Lower lobe of right lung (tissue), 2 donors: ENCODE measurements at regions of chr7 and their contacts with region 1.

Region 1: DNA sequence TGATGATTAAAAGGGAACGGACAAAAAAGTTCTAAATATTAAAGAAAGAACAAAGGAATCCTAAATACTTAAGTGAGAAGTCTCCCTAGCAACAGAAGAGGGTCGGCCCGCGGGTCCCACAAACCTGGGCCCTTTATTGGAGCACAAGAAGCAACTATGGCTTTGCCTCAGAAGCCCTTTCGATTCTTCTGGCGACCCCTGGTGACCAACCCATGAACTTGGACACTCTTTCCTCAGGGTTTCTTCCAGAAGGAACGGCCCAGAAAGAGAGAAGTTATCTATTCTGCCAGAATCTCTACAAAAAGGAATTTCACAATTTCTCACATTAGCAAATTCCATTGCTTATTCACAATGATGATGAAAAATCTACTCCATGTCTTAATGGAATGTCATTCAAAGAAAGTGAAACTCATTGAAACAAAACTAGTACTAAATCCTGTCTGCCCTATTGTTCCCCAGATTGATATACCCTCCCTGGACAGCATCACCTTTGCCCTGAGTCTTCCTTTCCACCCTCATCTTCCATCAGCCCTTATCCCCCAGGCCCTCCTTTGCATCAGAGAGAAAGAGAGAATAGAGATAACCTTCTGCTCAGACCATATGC is 43.7 kb downstream of the CPVL start:
- DNase-seq: peak; percentile 71
- ATAC-seq: peak; percentile 65 to 73
- H3K4me3 ChIP-seq: no peak overlapping the region
- H3K27ac ChIP-seq: no peak overlapping the region
- H3K4me1 ChIP-seq: peaks cover 33% of the 10 kb centered on the region
- H3K27me3 ChIP-seq: no peaks in the 10 kb centered on the region
- CTCF ChIP-seq: peak; percentile 66

Region 2: DNA sequence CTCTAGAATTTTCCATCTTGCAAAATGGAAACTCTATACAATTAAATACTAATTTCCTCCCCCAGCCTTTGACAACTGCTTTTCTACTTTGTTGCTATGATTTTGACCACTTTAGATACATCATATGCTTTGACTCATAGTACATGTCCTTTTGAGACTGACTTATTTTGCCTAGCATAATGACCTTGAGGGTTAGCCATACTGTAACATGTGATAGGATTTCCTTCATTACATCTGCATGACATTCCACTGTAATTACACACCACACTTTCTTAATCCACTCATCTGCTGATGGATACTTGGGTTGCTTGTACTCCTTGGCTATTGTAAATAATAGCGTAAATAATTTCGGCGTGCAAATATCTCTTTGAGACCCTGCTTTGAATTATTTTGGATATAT is 1049.7 kb before region 1 on chr7:
- intact Hi-C with region 1: no loop called
- DNase-seq: no peak
- ATAC-seq: no peak
- H3K4me3 ChIP-seq: no peak overlapping the region
- H3K27ac ChIP-seq: no peak overlapping the region
- H3K4me1 ChIP-seq: no peaks in the 10 kb centered on the region
- H3K27me3 ChIP-seq: no peaks in the 10 kb centered on the region
- CTCF ChIP-seq: no peak

Region 3: GRCh38 chr7:28926871-28927597 is 175.6 kb before region 1 on chr7:
- intact Hi-C with region 1: loop called (anchors 5 kb)
- DNase-seq: peak; percentile 77
- ATAC-seq: peak; percentile 90 to 93
- H3K4me3 ChIP-seq: peak overlapping the region; percentile 54
- H3K27ac ChIP-seq: peak overlapping the region; percentile 19
- H3K4me1 ChIP-seq: peaks cover 20% of the 10 kb centered on the region
- H3K27me3 ChIP-seq: no peaks in the 10 kb centered on the region
- CTCF ChIP-seq: peak; percentile 82

Region 4: GRCh38 chr7:29022301-29022988 is 80.2 kb before region 1 on chr7:
- intact Hi-C with region 1: no loop called
- DNase-seq: no peak
- ATAC-seq: peak in 1 of 2 donors; percentile 34
- H3K4me3 ChIP-seq: no peak overlapping the region
- H3K27ac ChIP-seq: no peak overlapping the region
- H3K4me1 ChIP-seq: no peaks in the 10 kb centered on the region
- H3K27me3 ChIP-seq: no peaks in the 10 kb centered on the region
- CTCF ChIP-seq: no peak

Region 5: GRCh38 chr7:29319719-29320521 is 217.3 kb after region 1 on chr7:
- intact Hi-C with region 1: no loop called
- DNase-seq: no peak
- ATAC-seq: peak; percentile 61 to 84
- H3K4me3 ChIP-seq: no peak overlapping the region
- H3K27ac ChIP-seq: no peak overlapping the region
- H3K4me1 ChIP-seq: peaks cover 8% of the 10 kb centered on the region
- H3K27me3 ChIP-seq: no peaks in the 10 kb centered on the region
- CTCF ChIP-seq: no peak